AG04450 (cell line): ENCODE measurements at regions of chr14 and their contacts with region 1.

Region 1: DNA sequence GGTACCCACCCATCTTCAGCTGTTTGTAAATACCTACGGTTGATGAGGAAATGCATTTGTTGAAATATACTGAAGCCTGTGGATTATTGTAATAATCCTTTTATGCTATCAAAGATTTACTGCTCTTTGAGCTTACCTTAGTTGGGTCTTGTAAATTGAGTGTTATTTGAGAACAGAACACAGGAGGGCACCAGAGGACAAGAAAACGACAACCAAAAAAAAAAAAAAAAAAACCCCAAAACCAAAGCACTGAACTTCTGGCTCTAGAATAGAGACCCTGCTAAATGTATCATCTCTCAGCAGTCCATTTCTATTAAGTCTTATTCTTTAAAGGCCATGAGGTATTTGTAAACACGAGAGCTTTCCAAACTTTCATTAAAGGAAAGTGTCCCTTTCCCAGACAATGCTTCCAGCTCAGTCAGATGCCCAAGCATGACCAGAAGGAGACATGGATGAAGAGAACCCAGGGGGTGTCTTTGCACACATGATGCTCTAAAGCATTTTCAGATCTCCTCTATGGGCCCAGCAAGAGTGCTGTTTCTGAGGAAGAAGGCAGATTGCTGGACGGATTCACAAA is 763.9 kb downstream of the NRXN3 start:
- DNase-seq: peak; percentile 18
- H3K4me3 ChIP-seq: no peak overlapping the region
- H3K27ac ChIP-seq: no peak overlapping the region
- H3K27me3 ChIP-seq: no peaks in the 10 kb centered on the region
- CTCF ChIP-seq: peak; percentile 59

Region 2: GRCh38 chr14:78921856-78922255 is 12.2 kb before region 1 on chr14:
- CTCF ChIA-PET with region 1: interaction called, 45 read pairs
- POLR2A ChIA-PET with region 1: no interaction called
- DNase-seq: peak; percentile 49
- H3K4me3 ChIP-seq: no peak overlapping the region
- H3K27ac ChIP-seq: no peak overlapping the region
- H3K27me3 ChIP-seq: no peaks in the 10 kb centered on the region
- CTCF ChIP-seq: no peak

Region 3: GRCh38 chr14:78959674-78960264 is 25.7 kb after region 1 on chr14:
- CTCF ChIA-PET with region 1: interaction called, 25 read pairs
- POLR2A ChIA-PET with region 1: no interaction called
- DNase-seq: peak; percentile 51
- H3K4me3 ChIP-seq: no peak overlapping the region
- H3K27ac ChIP-seq: no peak overlapping the region
- H3K27me3 ChIP-seq: no peaks in the 10 kb centered on the region
- CTCF ChIP-seq: peak; percentile 93

Region 4: GRCh38 chr14:79220268-79220667 is 286.2 kb after region 1 on chr14:
- CTCF ChIA-PET with region 1: interaction called, 11 read pairs
- POLR2A ChIA-PET with region 1: no interaction called
- DNase-seq: no peak
- H3K4me3 ChIP-seq: no peak overlapping the region
- H3K27ac ChIP-seq: no peak overlapping the region
- H3K27me3 ChIP-seq: no peaks in the 10 kb centered on the region
- CTCF ChIP-seq: no peak

Region 5: GRCh38 chr14:80862983-80863382 is 1928.9 kb after region 1 on chr14:
- CTCF ChIA-PET with region 1: interaction called, 27 read pairs
- POLR2A ChIA-PET with region 1: no interaction called
- DNase-seq: no peak
- H3K4me3 ChIP-seq: no peak overlapping the region
- H3K27ac ChIP-seq: no peak overlapping the region
- H3K27me3 ChIP-seq: no peaks in the 10 kb centered on the region
- CTCF ChIP-seq: peak; percentile 46